Activated CD4-positive, alpha-beta T cell treated with anti-CD3 and anti-CD28 coated beads for 36 hours (primary cell): ENCODE measurements at regions of chr13 and their contacts with region 1.

Region 1: GRCh38 chr13:48975856-48976575 is at the start of gene FNDC3A:
- DNase-seq: peak; percentile 95
- ATAC-seq: peak; percentile 78
- H3K4me3 Mint-ChIP-seq: peak within 1 kb of the TSS; percentile 91
- H3K27ac Mint-ChIP-seq: peak within 1 kb of the TSS; percentile 98
- H3K4me1 Mint-ChIP-seq: peaks cover 34% of the 10 kb centered on the region
- H3K27me3 Mint-ChIP-seq: no peaks in the 10 kb centered on the region
- total RNA-seq, gene FNDC3A: 20.8 to 26.9 TPM

Region 2: GRCh38 chr13:48094781-48095502 is 881.1 kb before region 1 on chr13 and contains the start of gene MED4:
- CTCF ChIA-PET with region 1: no interaction called
- POLR2A ChIA-PET with region 1: no interaction called
- intact Hi-C with region 1: loop called in 1 of 2 experiments (anchors 10 kb)
- DNase-seq: peak; percentile 98
- ATAC-seq: peak; percentile 97
- H3K4me3 Mint-ChIP-seq: peak within 1 kb of the TSS; percentile 97
- H3K27ac Mint-ChIP-seq: peak within 1 kb of the TSS; percentile 92
- H3K4me1 Mint-ChIP-seq: peaks cover 29% of the 10 kb centered on the region
- H3K27me3 Mint-ChIP-seq: no peaks in the 10 kb centered on the region
- total RNA-seq, gene MED4: 53.5 to 62.7 TPM

Region 3: GRCh38 chr13:48653472-48653939 is 322.5 kb before region 1 on chr13 and contains the start of gene CYSLTR2:
- CTCF ChIA-PET with region 1: no interaction called
- POLR2A ChIA-PET with region 1: no interaction called
- intact Hi-C with region 1: loop called in 1 of 2 experiments (anchors 5 kb)
- DNase-seq: no peak
- ATAC-seq: peak; percentile 88
- H3K4me3 Mint-ChIP-seq: peak within 1 kb of the TSS; percentile 60
- H3K27ac Mint-ChIP-seq: peak within 1 kb of the TSS; percentile 90
- H3K4me1 Mint-ChIP-seq: peaks cover 44% of the 10 kb centered on the region
- H3K27me3 Mint-ChIP-seq: no peaks in the 10 kb centered on the region
- total RNA-seq, gene CYSLTR2: 2.2 to 2.5 TPM

Region 4: DNA sequence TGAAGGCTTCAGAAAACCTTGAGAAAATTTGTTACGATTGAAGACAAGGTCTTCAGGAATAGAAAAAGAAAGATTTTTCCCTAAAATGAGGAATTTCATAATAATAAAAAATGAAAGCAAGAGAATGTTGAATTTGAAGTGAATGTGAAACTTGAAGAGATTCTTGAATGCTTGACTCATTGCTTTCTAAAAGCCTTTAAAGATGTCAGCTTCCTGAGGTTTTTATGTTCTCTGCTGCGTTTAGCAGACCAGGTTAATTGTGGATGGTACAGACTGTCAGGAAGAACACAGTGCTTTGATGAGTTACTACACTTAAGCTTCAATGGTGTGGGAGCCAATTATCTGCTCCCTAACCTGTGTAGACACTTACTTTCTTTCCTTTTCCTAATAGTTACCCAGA is 96.6 kb before region 1 on chr13:
- CTCF ChIA-PET with region 1: interaction called, 3 read pairs
- POLR2A ChIA-PET with region 1: interaction called, 6 read pairs
- intact Hi-C with region 1: loop called (anchors 1 to 2 kb)
- DNase-seq: no peak
- ATAC-seq: no peak
- H3K4me3 Mint-ChIP-seq: no peak overlapping the region
- H3K27ac Mint-ChIP-seq: no peak overlapping the region
- H3K4me1 Mint-ChIP-seq: peaks cover 46% of the 10 kb centered on the region
- H3K27me3 Mint-ChIP-seq: peaks cover 6% of the 10 kb centered on the region

Region 5: DNA sequence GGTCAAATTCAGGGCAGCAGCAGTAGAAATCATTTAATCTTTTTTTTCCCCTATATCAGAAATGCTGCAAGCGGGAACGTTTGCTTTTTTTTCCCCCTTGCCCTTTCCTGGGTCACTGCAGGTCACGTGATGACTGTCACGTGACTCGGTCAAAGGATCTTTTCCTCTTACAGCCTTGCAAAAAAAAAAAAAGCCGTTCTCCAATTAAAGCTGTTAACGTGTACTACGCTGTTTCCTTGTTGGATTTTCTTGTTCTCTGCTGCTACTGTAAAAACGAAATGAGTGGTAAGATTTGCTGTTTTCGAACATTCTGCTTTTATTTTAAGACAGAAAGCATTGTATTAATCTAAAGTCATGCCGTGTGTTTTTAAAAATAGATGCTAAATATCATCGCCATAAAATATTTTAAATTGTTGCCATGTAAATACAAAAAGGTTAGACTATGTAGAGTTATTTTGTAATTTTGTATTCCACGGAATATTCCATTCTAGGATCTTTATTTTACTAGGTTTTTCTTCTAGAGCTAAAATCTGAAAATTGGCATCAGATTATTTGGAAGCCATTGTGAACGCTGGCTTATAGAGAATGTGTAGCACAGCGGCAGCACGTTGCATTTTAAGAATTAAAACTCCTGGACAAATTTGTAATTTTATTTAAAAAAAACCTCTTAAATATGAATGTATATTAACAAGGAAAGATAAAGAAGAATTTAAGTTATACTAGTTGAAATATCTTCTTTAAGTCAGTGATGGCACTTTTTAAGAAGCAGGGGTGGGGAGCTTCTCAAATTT is 134.3 kb after region 1 on chr13:
- CTCF ChIA-PET with region 1: interaction called, 3 read pairs
- POLR2A ChIA-PET with region 1: no interaction called
- intact Hi-C with region 1: loop called (anchors 1 to 5 kb)
- DNase-seq: peak; percentile 87
- ATAC-seq: peak; percentile 79
- H3K4me3 Mint-ChIP-seq: peak overlapping the region; percentile 85
- H3K27ac Mint-ChIP-seq: peak overlapping the region; percentile 86
- H3K4me1 Mint-ChIP-seq: peaks cover 25% of the 10 kb centered on the region
- H3K27me3 Mint-ChIP-seq: no peaks in the 10 kb centered on the region

Region 6: DNA sequence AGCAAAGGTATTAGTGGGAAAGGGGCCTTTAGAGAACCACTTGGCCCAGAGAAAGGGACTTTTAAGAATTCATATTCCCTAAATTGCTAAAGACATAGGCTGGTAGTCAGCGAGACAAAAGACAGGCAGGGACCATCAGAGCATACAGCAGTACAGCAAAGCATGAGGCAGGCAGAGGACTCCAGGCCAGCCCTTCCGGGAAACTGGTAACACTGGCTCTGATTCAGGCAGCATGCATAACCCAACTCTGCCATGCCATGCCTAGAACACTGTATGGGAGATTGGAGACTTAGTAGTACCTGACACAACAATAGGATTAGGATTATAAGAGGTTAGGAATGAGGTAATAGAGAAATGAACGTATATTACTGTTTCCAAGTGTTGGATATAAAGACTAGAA is 433.0 kb after region 1 on chr13:
- CTCF ChIA-PET with region 1: no interaction called
- POLR2A ChIA-PET with region 1: no interaction called
- intact Hi-C with region 1: no loop called
- DNase-seq: no peak
- ATAC-seq: no peak
- H3K4me3 Mint-ChIP-seq: no peak overlapping the region
- H3K27ac Mint-ChIP-seq: no peak overlapping the region
- H3K4me1 Mint-ChIP-seq: no peaks in the 10 kb centered on the region
- H3K27me3 Mint-ChIP-seq: no peaks in the 10 kb centered on the region

Region 7: DNA sequence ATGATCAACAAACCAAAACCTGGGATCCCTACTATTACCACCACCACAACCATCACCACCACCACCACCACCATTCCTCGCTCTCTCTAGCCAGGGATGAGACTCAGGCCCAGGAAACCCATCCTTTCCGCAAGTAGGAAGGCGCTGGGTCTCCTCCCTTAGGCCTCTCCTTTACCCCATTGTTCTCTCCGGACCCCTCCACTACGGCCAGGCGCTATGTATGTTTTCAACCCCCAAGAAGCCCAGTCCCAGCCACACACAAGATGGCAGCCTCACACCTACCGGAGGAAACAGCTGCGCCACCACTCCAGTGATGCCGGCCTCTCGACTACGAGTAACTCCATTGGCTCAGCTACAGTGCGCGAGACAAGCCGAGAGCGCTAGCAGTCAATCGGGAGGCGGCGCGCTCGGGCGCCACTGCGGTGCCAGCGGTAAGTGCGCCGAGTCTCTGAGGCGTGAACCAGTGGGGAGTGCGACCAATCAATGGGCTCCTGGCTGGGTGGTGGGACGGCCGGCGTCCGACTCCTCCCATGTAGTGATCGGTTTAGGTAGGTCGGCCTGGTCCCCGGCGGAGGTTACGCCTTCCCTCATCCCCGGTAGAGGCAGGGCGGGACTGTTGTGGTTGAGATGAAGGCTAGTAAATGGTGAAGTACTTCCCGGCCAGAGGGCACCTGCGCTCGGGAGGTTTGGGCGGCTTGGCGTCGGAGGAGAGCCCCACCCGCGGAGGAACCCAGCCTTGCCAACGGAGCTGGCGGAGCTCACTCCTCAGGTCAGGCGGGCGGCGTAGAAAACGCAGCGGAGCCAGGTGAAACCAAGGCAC is 467.9 kb after region 1 on chr13 and contains the starts of genes CAB39L and SETDB2:
- CTCF ChIA-PET with region 1: no interaction called
- POLR2A ChIA-PET with region 1: no interaction called
- intact Hi-C with region 1: loop called (anchors 1 to 5 kb)
- DNase-seq: peak; percentile 99
- ATAC-seq: peak; percentile 94
- H3K4me3 Mint-ChIP-seq: peak within 1 kb of the TSS; percentile 100
- H3K27ac Mint-ChIP-seq: peak within 1 kb of the TSS; percentile 100
- H3K4me1 Mint-ChIP-seq: peaks cover 57% of the 10 kb centered on the region
- H3K27me3 Mint-ChIP-seq: no peaks in the 10 kb centered on the region
- total RNA-seq, gene CAB39L: 4.8 to 5.7 TPM
- total RNA-seq, gene SETDB2: 14.2 to 15.1 TPM